Heart left ventricle (tissue), 16 donors: ENCODE measurements at regions of chr9 and their contacts with region 1.

Region 1: DNA sequence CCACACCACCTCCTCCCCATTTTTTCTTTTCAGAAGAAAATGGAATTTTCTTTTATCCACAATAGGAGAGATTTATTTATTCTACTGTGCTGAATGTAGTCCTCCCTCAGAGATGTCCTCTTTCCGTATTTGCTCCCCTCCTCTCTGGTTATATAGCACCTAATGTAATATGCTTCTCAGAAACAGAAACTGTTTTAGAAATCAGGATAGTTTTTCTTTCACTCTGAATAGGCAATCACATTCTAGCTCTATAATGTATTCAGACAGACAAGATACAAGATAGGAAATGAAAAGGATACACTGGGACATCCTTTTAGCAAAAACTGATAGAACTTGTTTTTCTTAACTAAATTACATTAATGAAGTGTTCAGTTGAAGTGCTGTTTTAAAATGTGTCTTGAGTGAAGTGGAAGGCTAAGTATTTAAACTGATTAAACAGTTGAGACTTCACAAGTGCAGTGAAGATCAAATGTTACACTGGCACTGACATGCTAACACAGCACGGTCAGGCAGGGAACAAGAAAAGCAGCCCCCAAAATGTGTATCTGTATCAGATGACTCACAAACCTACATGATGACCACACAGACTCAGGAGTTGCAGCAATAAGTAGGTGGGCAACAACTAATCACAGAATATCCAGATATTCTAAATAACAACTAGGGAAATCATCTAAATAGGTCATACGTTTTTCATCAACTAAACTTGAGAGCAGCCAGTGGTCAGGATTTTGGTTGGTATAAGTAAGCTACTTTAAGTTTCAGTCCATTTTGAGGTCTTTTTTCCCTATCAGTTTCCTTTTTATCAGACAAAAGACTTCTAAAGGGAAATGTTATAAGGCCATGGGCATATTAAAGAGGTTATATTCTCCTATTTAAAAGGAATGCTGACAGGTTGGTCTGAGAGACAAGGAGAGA is 260.4 kb downstream of the MLLT3 start:
- DNase-seq: no peak
- ATAC-seq: no peak
- H3K4me3 ChIP-seq: no peak overlapping the region
- H3K27ac ChIP-seq: no peak overlapping the region
- H3K4me1 ChIP-seq: peaks cover 0 to 7% (median 3%) of the 10 kb centered on the region in 12 donors
- H3K27me3 ChIP-seq: no peaks in the 10 kb centered on the region
- CTCF ChIP-seq: no peak
- POLR2A ChIP-seq: no peak

Region 2: DNA sequence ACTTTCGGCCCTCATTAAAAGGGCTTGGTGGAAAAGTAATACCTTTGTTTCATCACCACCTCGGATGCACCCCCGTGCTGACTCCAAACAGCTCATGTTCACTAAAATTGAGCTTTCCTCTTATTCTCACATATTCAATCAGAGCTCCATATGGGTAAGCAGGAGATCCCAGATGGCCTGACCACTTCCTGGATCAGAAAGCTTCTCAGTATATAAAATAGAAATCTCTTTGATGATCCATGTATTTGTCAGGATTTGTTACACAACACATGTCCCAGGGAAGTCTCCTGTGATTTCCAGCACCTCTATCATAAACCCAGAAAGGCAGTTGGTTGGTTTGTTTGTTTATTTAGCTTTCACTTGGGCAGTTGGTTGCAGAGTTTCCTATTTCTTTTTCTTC is 141.6 kb before region 1 on chr9:
- intact Hi-C with region 1: no loop called
- DNase-seq: no peak
- ATAC-seq: no peak
- H3K4me3 ChIP-seq: no peak overlapping the region
- H3K27ac ChIP-seq: no peak overlapping the region
- H3K4me1 ChIP-seq: no peaks in the 10 kb centered on the region
- H3K27me3 ChIP-seq: no peaks in the 10 kb centered on the region
- CTCF ChIP-seq: no peak
- POLR2A ChIP-seq: no peak

Region 3: DNA sequence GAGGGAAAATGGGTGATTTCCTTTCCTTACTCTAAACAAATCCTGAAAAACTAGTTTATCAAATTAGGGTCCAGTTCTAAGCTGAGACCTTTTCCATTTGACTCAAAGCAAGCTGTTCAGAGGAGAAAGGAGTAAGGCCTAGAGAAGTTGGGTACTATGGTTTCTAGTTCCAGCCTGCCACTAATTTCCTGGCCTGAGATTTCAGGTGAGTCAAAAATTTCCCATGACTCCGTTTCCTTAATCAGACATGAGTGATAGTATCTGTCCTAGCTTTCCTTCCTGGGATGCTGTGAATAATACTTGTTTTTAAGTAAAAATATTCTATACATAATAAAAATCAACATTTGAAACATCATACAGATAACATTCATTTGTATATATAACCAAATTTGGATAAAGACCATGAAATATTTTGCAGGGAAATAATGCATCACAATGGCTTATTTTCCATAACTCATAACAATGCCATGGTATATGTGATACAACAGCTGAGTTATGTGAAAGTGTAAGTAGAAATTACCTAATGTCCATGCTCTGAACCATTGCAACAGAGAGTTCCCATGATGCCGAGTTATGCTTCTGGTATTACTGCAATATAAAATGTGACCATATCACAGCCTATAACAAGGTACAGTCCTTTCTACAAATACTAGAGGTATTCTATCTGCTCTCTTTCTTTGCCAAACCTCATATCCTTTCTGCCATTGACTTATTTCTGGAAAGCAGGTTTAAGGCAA is 117.7 kb after region 1 on chr9:
- intact Hi-C with region 1: loop called in 2 of 10 experiments (anchors 5 to 10 kb)
- DNase-seq: no peak
- ATAC-seq: no peak
- H3K4me3 ChIP-seq: no peak overlapping the region
- H3K27ac ChIP-seq: no peak overlapping the region
- H3K4me1 ChIP-seq: peaks cover 0 to 47% (median 23%) of the 10 kb centered on the region in 12 donors
- H3K27me3 ChIP-seq: no peaks in the 10 kb centered on the region
- CTCF ChIP-seq: no peak
- POLR2A ChIP-seq: no peak